Ascending aorta (tissue), 2 donors: ENCODE measurements at regions of chr9 and their contacts with region 1.

Region 1: DNA sequence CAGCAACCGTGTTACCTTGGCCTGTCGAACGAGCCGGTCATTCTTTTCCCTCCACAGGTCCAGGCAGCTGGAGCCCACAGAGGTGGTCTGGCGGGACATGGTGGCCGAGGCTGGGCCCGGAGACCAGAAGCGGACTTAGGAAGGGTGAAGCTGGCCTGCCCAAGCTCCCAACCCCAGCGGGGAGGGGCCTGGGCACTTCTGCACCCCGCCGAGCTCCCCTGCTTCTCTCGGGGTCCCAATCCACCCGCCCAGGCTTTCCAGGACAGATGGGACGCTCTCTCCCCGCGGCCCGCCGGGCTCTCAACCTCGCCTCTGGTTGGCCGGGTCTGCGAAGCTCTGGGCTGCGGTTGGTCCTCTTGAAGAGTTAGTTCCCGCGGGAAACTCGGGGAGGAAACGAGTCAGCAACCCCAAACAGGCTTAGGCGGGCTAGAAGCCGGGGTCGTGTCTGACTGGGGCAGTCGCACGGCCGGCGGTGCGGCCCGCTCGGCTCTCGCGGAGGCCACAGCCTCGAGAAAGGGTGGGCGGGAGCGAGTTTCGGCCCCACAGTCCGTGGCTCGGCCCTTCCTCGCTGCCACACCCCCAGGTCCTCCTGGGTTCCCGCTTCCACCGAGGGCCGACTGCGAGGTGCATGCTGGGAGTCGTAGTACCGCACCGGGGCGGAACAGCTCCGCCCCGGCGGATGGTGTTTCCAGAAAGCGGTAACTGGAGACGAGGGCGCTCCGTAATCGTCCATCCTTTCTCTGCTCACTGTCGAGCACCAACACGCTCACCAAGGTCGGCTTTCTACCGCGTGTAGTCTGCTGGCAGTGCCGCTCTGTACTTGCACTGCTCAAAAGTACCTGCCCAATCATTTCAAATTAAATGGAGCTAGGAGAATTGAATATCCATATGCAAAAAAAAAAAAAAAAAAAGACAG is at the start of gene FANCG:
- DNase-seq: peak; percentile 71 to 95
- H3K4me3 ChIP-seq: peak within 1 kb of the TSS; percentile 76 to 81
- H3K27ac ChIP-seq: peak within 1 kb of the TSS; percentile 48 to 77
- H3K4me1 ChIP-seq: peaks cover 6 to 10% of the 10 kb centered on the region in 2 donors
- H3K27me3 ChIP-seq: no peaks in the 10 kb centered on the region
- CTCF ChIP-seq: no peak
- total RNA-seq, gene FANCG: 45.4 TPM

Region 2: GRCh38 chr9:35051069-35051967 is 28.4 kb before region 1 on chr9:
- intact Hi-C with region 1: no loop called
- DNase-seq: no peak
- H3K4me3 ChIP-seq: no peak overlapping the region
- H3K27ac ChIP-seq: no peak overlapping the region
- H3K4me1 ChIP-seq: no peaks in the 10 kb centered on the region
- H3K27me3 ChIP-seq: no peaks in the 10 kb centered on the region
- CTCF ChIP-seq: peak in 2 of 3 experiments; percentile 43 to 58

Region 3: DNA sequence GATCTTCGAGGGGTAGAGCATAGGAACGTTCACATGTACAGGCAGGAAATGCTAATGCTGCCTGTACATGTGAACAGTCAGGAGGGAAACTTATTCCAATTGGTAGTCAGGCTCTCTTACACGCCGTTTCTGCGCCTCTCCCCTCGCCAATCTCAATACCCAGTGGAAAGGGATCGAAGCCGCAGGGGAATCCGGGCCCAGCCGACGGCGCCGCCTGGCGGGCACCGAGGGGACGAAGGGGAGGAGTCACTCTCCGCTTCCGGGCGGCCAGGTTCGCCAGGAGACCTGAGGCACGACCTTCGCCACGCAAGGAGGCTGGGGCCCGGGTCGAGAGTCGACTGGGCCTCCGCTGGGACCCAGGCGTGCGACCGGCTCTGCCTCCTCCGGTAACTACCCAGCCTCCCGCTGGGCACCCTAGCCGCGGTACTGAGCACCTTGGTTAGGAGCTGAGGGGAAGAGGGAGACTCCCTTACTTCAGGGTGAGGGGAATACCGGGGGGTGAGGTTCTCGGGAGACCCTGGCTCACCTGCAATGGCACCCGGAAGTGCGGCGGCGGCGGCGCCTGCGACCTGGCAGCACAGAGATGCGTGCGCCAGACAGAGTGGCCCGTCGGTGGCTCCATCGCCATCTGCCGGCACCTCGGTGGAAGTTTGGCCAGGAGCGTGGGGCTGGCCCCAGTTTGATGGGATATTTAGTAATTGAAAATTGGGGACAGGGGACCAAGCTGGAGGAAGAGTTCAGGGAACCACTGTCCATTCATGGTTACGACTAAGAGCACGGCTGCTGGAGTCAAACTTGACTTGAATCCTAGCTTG is 16.6 kb after region 1 on chr9 and contains the start of gene PIGO:
- intact Hi-C with region 1: loop called (anchors 1 kb)
- DNase-seq: peak in 1 of 2 donors; percentile 94
- H3K4me3 ChIP-seq: peak within 1 kb of the TSS; percentile 82 to 87
- H3K27ac ChIP-seq: peak within 1 kb of the TSS; percentile 96 to 99
- H3K4me1 ChIP-seq: peaks cover 0 to 10% of the 10 kb centered on the region in 2 donors
- H3K27me3 ChIP-seq: no peaks in the 10 kb centered on the region
- CTCF ChIP-seq: peak; percentile 71 to 79 (median 76)
- total RNA-seq, gene PIGO: 2.4 TPM

Region 4: GRCh38 chr9:35111001-35111933 is 31.6 kb after region 1 on chr9:
- intact Hi-C with region 1: loop called (anchors 2 kb)
- DNase-seq: peak; percentile 95 to 99
- H3K4me3 ChIP-seq: peak overlapping the region; percentile 87 to 92
- H3K27ac ChIP-seq: peak overlapping the region; percentile 98 to 99
- H3K4me1 ChIP-seq: peaks cover 16 to 39% of the 10 kb centered on the region in 2 donors
- H3K27me3 ChIP-seq: no peaks in the 10 kb centered on the region
- CTCF ChIP-seq: no peak